Heart right ventricle (tissue), 16 donors: ENCODE measurements at regions of chr7 and their contacts with region 1.

Region 1: DNA sequence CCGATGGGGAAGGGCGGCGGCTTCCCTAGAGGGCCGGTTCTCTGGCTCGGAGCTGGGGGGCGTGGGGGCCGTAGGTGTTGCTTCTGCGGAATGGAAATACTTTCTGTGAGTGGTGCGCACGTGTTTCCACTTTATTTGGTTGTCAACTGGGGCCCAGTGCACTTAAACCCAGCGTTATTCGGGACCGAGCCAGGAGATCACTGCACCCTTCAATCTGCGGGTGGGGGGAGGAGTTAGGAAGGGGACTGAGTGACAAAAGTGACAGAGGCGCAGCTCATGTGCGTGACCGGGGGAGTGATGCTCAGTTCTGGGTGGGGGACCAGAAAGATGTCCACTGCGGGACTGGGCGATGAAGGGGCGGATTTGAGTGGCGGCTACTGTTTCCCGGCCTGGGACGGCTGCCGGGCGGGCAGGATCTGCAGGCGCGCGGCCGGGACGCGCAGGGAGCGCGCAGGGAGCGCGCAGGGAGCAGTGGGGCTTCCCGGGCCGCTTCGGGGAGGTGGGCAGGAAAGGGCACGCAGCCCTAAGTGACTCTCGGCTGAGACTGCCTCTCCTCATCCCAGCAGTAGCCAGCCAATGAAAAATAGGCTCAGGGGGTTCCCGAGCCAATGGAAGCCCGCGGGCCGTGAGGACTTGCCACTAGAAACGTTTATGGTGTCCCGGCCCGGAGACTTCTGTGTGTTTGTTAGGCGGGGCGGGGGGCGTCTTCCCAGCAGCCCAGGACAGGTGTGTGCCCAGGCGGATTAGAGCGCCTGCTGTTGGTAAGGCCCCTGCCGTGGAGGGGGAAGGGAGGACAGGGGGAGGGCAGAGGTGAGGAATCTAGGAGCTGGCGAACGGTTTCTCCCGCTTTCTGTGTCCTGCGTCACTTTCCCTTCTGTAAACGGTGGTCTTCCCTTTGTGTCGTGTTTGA is 54.3 kb upstream of the KDM7A start:
- DNase-seq: peak; percentile 34 to 39
- ATAC-seq: peak; percentile 48 to 79 (median 65)
- H3K4me3 ChIP-seq: peak overlapping the region in 9 of 10 donors; percentile 39 to 67 (median 62)
- H3K27ac ChIP-seq: peak overlapping the region in 9 of 10 donors; percentile 19 to 91 (median 65)
- H3K4me1 ChIP-seq: peaks cover 0 to 36% (median 15%) of the 10 kb centered on the region in 9 donors
- H3K27me3 ChIP-seq: peaks cover 0 to 10% (median 3%) of the 10 kb centered on the region in 7 donors
- CTCF ChIP-seq: peak in 3 of 9 donors; percentile 7 to 16 (median 13)

Region 2: GRCh38 chr7:139494835-139495579 is 736.1 kb before region 1 on chr7:
- intact Hi-C with region 1: no loop called
- DNase-seq: no peak
- ATAC-seq: peak in 1 of 8 donors; percentile 49
- H3K4me3 ChIP-seq: no peak overlapping the region
- H3K27ac ChIP-seq: no peak overlapping the region
- H3K4me1 ChIP-seq: peaks cover 0 to 13% (median 4%) of the 10 kb centered on the region in 9 donors
- H3K27me3 ChIP-seq: peaks cover 0 to 11% (median 8%) of the 10 kb centered on the region in 7 donors
- CTCF ChIP-seq: no peak

Region 3: GRCh38 chr7:140182917-140183316 is 48.2 kb before region 1 on chr7:
- intact Hi-C with region 1: loop called in 5 of 10 experiments (anchors 5 kb)
- DNase-seq: no peak
- ATAC-seq: no peak
- H3K4me3 ChIP-seq: no peak overlapping the region
- H3K27ac ChIP-seq: no peak overlapping the region
- H3K4me1 ChIP-seq: peaks cover 0 to 8% (median 1%) of the 10 kb centered on the region in 9 donors
- H3K27me3 ChIP-seq: peaks cover 0 to 43% (median 0%) of the 10 kb centered on the region in 7 donors
- CTCF ChIP-seq: no peak

Region 4: GRCh38 chr7:140192620-140193019 is 38.5 kb before region 1 on chr7:
- intact Hi-C with region 1: loop called in 2 of 10 experiments (anchors 5 kb)
- DNase-seq: no peak
- ATAC-seq: no peak
- H3K4me3 ChIP-seq: no peak overlapping the region
- H3K27ac ChIP-seq: peak overlapping the region in 2 of 10 donors; percentile 17 to 26
- H3K4me1 ChIP-seq: peaks cover 0 to 36% (median 10%) of the 10 kb centered on the region in 9 donors
- H3K27me3 ChIP-seq: no peaks in the 10 kb centered on the region
- CTCF ChIP-seq: no peak

Region 5: GRCh38 chr7:140209866-140210609 is 21.1 kb before region 1 on chr7:
- intact Hi-C with region 1: no loop called
- DNase-seq: peak in 1 of 2 donors; percentile 22
- ATAC-seq: peak in 6 of 8 donors; percentile 33 to 68 (median 54)
- H3K4me3 ChIP-seq: no peak overlapping the region
- H3K27ac ChIP-seq: peak overlapping the region in 1 of 10 donors; percentile 81
- H3K4me1 ChIP-seq: peaks cover 0 to 37% (median 0%) of the 10 kb centered on the region in 9 donors
- H3K27me3 ChIP-seq: peaks cover 0 to 3% (median 0%) of the 10 kb centered on the region in 7 donors
- CTCF ChIP-seq: no peak

Region 6: GRCh38 chr7:140304191-140304799 is 73.2 kb after region 1 on chr7:
- intact Hi-C with region 1: loop called in 1 of 10 experiments (anchors 5 kb)
- DNase-seq: no peak
- ATAC-seq: peak in 7 of 8 donors; percentile 59 to 83 (median 77)
- H3K4me3 ChIP-seq: no peak overlapping the region
- H3K27ac ChIP-seq: no peak overlapping the region
- H3K4me1 ChIP-seq: peaks cover 0 to 17% (median 0%) of the 10 kb centered on the region in 9 donors
- H3K27me3 ChIP-seq: no peaks in the 10 kb centered on the region
- CTCF ChIP-seq: peak; percentile 16 to 68 (median 54)